A673 (cell line): ENCODE measurements at regions of chr7 and their contacts with region 1.

Region 1: DNA sequence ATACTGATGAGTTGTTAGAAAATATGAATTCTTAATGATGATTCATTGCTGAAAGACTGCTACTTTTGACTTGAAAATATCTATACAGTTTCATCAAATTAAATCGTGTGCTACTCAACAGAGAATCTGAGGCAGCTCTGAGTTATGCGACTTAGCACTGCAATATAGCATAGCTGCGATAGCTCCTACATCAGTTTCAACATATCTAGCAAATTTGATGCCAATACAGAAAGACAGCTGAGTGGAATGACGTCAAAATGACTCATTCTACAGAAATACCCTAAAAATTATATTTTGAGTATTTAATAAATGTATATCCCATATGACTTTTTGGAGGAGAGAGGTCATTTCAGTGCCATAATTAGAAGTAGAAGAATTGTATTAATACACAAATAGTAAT is 1.1 kb upstream of the TARP start:
- DNase-seq: no peak
- H3K4me3 ChIP-seq: no peak overlapping the region
- H3K27ac ChIP-seq: no peak overlapping the region
- H3K4me1 ChIP-seq: no peaks in the 10 kb centered on the region
- H3K27me3 ChIP-seq: no peaks in the 10 kb centered on the region
- CTCF ChIP-seq: no peak

Region 2: DNA sequence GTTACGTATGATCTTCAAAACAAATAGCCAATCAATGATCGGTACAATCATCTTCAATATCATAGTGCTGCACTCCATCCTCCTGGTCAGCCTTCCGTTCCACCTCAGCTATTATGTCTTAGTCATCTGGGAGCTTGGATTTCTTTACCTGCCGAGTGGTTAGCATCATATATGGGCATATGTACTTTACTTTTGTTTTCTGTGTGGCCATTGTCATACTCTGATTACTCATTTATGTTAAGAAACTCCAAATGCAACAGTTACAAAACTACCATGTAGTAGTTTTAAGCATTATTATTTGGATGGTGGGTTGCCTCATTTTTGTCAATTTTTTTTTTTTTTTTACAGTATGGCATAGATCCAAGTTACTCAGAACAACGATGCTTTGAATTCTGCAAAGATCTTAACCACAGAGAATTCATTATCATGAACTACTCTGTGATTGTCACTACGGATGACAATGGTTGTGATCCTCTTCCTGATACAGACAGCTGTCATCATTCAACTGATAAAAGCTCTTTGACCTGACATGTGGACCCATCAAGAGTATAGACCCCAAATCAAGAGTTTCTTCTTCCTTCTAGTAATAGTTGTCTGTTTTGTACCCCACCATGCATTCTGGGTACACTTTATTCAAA is 478.2 kb before region 1 on chr7:
- CTCF ChIA-PET with region 1: no interaction called
- POLR2A ChIA-PET with region 1: no interaction called
- intact Hi-C with region 1: no loop called
- DNase-seq: no peak
- H3K4me3 ChIP-seq: no peak overlapping the region
- H3K27ac ChIP-seq: no peak overlapping the region
- H3K4me1 ChIP-seq: no peaks in the 10 kb centered on the region
- H3K27me3 ChIP-seq: no peaks in the 10 kb centered on the region
- CTCF ChIP-seq: no peak

Region 3: DNA sequence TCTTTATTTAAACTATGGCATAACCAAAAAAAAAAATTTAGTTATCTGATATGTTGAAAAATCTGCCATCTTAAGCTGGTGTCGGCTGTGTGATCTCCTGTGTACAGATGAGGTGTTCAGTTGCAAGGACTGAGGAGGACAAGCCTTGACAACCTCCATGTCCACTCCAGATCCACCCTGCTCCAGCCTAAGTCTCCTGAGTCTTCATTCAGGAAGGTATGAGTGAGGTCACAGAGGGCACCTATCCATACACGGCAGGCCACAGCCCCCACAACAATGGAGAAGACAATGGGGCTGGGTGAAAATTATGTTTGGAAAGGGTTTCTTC is 17.2 kb before region 1 on chr7:
- CTCF ChIA-PET with region 1: no interaction called
- POLR2A ChIA-PET with region 1: no interaction called
- intact Hi-C with region 1: loop called (anchors 2 kb)
- DNase-seq: no peak
- H3K4me3 ChIP-seq: no peak overlapping the region
- H3K27ac ChIP-seq: no peak overlapping the region
- H3K4me1 ChIP-seq: no peaks in the 10 kb centered on the region
- H3K27me3 ChIP-seq: no peaks in the 10 kb centered on the region
- CTCF ChIP-seq: no peak